ENCODE measurements at regions of chr1 and their contacts with region 1.

Region 1: GRCh38 chr1:207084701-207085180 is 3.9 kb upstream of the C4BPB start:
- DNase-seq: no peak

Region 2: GRCh38 chr1:206050655-206051235 is 1034.0 kb before region 1 on chr1:
- intact Hi-C with region 1: no loop called
- DNase-seq: no peak

Region 3: GRCh38 chr1:207499573-207499972 is 414.8 kb after region 1 on chr1:
- intact Hi-C with region 1: loop called (anchors 5 kb)
- DNase-seq: peak; percentile 81

Measured in cardiac septum (tissue), 1 donor.